Prostate gland (tissue), 2 donors: ENCODE measurements at regions of chr15 and their contacts with region 1.

Region 1: DNA sequence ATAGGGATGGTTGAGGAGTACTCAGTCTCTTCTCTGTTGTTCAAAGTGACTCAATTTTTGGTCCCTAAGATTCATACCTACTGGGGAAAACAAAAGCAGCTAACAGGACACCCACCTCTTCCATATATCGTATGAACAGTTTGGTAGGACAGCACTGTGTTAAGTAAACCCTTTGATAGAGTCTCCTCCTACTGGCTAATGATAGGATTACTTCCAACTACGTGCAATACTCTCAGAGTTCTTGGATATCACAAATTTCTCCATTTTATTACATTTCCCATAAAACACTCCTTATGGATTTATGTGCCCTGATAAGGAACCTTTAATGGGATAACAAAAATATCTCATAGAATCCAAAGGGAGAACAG is 200.2 kb upstream of the GOLGA6L4 start:
- DNase-seq: no peak
- H3K4me3 ChIP-seq: no peak overlapping the region
- H3K27ac ChIP-seq: no peak overlapping the region
- H3K4me1 ChIP-seq: no peaks in the 10 kb centered on the region
- H3K27me3 ChIP-seq: no peaks in the 10 kb centered on the region
- CTCF ChIP-seq: peak; percentile 20 to 61 (median 50)
- POLR2A ChIP-seq: no peak

Region 2: DNA sequence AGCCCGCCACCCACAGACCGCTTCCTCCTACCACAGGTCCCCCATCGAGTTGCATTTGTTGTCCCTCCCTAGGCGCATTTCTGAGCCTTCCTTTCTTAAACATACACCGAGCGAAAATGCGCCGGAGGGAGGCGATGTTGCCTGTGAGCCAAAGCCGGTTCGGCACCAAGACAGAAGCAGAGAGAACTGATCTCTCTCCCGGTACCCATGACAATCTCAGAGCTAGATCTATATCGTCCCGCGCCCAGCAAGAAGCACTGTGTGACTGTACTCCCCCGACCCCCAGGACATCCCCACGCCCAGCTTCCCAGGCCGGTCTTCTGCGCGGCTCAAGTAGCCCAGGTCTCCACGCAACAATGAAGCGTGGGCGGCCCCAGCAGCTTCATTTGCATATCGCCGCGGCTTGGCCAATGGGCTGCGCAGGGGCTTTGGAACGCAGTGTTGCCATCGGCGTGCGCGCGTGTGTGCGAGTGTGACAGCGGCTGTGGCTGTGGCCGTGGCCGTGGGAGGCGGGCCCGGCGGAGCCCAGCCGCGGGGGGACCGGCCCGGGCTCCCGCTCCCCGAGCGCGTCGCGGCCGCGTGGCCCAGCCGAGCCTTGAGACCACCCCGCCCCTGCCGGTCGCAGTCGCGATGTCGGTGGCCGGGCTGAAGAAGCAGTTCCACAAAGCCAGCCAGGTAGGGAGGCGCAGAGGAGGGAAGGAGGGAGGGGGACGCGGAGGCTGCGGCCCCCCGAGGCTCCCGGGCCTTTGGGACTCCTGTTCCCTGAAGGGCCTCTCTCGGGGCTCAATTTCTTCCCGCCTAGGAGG is 588.3 kb before region 1 on chr15 and contains the start of gene SH3GL3:
- intact Hi-C with region 1: loop called (anchors 5 kb)
- DNase-seq: peak; percentile 81
- H3K4me3 ChIP-seq: peak within 1 kb of the TSS; percentile 31 to 40
- H3K27ac ChIP-seq: no peak within 1 kb of the TSS
- H3K4me1 ChIP-seq: peaks cover 6% of the 10 kb centered on the region
- H3K27me3 ChIP-seq: no peaks in the 10 kb centered on the region
- CTCF ChIP-seq: peak in 3 of 4 experiments; percentile 10 to 38 (median 29)
- POLR2A ChIP-seq: no peak
- total RNA-seq, gene SH3GL3: 2.2 to 7.4 TPM

Region 3: DNA sequence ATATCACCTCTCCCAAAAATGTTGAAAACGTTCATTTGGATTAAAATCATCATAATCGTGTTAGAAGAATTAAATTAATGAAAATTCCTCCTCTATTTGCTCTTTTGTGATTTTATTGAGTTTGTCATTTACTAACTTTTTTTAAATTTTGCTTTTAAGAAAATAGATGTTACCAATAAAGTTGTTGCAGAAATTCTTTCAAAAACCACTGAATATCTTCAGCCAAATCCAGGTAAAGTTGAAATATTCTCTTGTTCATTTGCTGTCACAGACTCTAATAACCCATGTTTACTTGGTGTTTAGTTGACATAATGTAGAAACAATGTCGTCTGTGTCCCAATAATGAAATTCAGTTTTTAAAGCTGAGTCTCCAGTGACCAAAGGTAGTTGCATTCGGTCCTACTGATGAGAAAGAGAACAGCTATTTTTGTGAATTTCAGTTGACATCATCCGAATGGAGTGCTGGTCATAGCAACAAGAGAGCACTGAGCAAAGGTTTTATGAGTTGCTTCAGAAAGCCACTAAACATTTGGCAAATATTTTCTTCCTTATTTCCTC is 470.3 kb before region 1 on chr15:
- intact Hi-C with region 1: loop called (anchors 2 kb)
- DNase-seq: no peak
- H3K4me3 ChIP-seq: no peak overlapping the region
- H3K27ac ChIP-seq: no peak overlapping the region
- H3K4me1 ChIP-seq: no peaks in the 10 kb centered on the region
- H3K27me3 ChIP-seq: no peaks in the 10 kb centered on the region
- CTCF ChIP-seq: no peak
- POLR2A ChIP-seq: no peak

Region 4: GRCh38 chr15:83571820-83572707 is 463.3 kb before region 1 on chr15:
- intact Hi-C with region 1: loop called (anchors 2 kb)
- DNase-seq: no peak
- H3K4me3 ChIP-seq: no peak overlapping the region
- H3K27ac ChIP-seq: no peak overlapping the region
- H3K4me1 ChIP-seq: no peaks in the 10 kb centered on the region
- H3K27me3 ChIP-seq: no peaks in the 10 kb centered on the region
- CTCF ChIP-seq: peak in 3 of 4 experiments; percentile 28 to 50 (median 41)
- POLR2A ChIP-seq: no peak

Region 5: GRCh38 chr15:84082739-84083138 is 47.4 kb after region 1 on chr15:
- intact Hi-C with region 1: no loop called
- DNase-seq: no peak
- H3K4me3 ChIP-seq: no peak overlapping the region
- H3K27ac ChIP-seq: no peak overlapping the region
- H3K4me1 ChIP-seq: no peaks in the 10 kb centered on the region
- H3K27me3 ChIP-seq: peaks cover 4% of the 10 kb centered on the region
- CTCF ChIP-seq: no peak
- POLR2A ChIP-seq: no peak